Activated CD4-positive, alpha-beta T cell treated with anti-CD3 and anti-CD28 coated beads, Interleukin-2, amount 10 ng/mL, durations not matched to agents 7 days and 5 days (primary cell): ENCODE measurements at regions of chr7 and their contacts with region 1.

Region 1: DNA sequence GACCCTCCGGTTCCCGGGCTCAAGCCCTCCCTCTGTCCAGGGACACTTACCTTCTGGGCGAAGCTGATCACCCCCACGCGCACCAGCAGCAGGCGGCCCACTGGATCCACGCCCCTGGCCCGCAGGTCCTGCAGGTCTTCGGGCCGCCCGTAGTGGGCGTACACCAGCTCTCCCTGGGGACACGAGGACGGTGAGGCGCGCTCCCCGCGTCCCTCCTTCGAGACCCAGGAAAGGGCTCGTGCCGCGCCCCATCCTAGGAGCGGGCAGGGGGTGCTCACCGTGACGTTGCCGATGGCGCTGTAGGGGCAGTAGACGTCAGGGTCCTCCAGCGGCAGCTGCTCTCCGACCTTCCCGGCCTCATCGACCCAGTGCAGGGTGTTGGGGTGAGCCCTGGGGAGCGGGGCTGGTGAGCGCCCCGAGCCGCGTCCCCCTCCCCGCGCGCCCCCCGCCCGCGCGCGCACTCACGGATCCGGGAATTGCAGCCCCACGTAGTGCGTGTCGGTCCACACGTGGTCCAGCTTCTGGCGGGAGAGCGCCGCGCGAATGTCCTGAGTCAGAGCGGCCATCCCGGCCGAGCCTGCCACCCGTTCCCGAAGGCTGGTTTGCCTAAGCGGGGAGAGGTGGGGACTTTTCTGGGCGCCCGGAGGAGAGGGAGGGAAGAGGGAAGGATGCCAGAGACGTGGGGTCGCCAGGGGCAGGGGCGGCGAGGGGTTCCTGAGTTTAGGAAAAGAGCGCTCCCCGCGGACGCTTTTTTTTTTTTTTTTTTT is 8.2 kb downstream of the TFR2 start:
- DNase-seq: peak; percentile 61
- H3K4me3 Mint-ChIP-seq: peak overlapping the region; percentile 78
- H3K27ac Mint-ChIP-seq: peak overlapping the region; percentile 88
- H3K4me1 Mint-ChIP-seq: peaks cover 41% of the 10 kb centered on the region
- H3K27me3 Mint-ChIP-seq: peaks cover 2% of the 10 kb centered on the region

Region 2: GRCh38 chr7:100607111-100607510 is 26.0 kb before region 1 on chr7:
- CTCF ChIA-PET with region 1: interaction called, 25 read pairs
- POLR2A ChIA-PET with region 1: no interaction called
- DNase-seq: no peak
- H3K4me3 Mint-ChIP-seq: no peak overlapping the region
- H3K27ac Mint-ChIP-seq: no peak overlapping the region
- H3K4me1 Mint-ChIP-seq: peaks cover 40% of the 10 kb centered on the region
- H3K27me3 Mint-ChIP-seq: peaks cover 4% of the 10 kb centered on the region

Region 3: GRCh38 chr7:100655908-100656674 is 23.0 kb after region 1 on chr7 and contains the start of gene ACTL6B:
- CTCF ChIA-PET with region 1: interaction called, 11 read pairs
- POLR2A ChIA-PET with region 1: no interaction called
- DNase-seq: peak; percentile 69
- H3K4me3 Mint-ChIP-seq: no peak within 1 kb of the TSS
- H3K27ac Mint-ChIP-seq: no peak within 1 kb of the TSS
- H3K4me1 Mint-ChIP-seq: peaks cover 2% of the 10 kb centered on the region
- H3K27me3 Mint-ChIP-seq: peaks cover 34% of the 10 kb centered on the region
- total RNA-seq, gene ACTL6B: not detected